ENCODE measurements at regions of chr1 and their contacts with region 1.

Region 1: DNA sequence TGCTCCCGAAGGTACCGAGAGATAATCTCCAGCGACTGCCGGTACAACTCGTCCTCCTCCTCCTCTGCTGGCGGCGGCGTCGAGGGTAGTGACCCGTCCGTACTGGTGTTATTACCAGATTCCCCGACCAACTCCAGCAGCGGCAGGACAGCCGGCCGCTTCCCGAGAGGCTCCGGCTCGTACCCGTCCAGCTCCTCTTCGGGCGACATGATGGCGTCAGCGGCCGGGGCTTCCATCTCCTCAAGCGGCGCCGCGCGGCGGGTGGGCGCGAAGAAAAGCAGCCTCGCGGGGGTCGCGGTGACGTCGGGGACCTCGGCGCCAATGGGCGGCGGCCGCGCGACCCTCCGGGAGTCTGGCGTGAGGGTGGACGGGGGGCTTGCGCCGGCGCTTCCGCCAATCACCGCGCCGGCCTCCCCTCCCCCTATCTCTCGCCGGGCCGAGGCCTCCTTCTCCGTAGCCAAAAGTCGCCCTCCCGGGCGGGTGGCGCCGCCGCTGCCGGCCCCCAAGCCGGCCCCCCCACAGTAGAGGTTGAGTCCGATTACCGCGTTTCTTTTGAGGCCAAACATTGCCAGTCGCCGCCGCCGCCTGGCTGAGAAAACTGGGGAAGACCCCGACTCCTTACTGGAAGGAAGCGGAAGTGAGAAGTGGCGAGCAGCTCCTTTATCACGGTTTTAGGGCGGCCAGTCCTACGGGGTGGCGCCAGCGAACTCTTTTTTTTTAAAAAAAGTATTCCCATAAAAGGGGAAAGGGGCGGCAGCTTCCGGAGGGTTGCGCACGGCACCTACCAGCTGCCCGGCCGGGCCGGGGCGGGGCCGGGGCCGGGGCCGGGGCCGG is at the start of gene MCL1:
- DNase-seq: peak; percentile 94 to 98 (median 97)
- H3K4me3 ChIP-seq: peak within 1 kb of the TSS; percentile 91 to 100 (median 99)
- H3K27ac ChIP-seq: peak within 1 kb of the TSS; percentile 97 to 98
- H3K4me1 ChIP-seq: peaks cover 25 to 34% (median 32%) of the 10 kb centered on the region in 4 experiments
- H3K27me3 ChIP-seq: no peaks in the 10 kb centered on the region

Region 2: GRCh38 chr1:150537732-150538684 is 41.2 kb before region 1 on chr1:
- CTCF ChIA-PET with region 1: no interaction called
- POLR2A ChIA-PET with region 1: no interaction called
- DNase-seq: no peak
- H3K4me3 ChIP-seq: no peak overlapping the region
- H3K27ac ChIP-seq: no peak overlapping the region
- H3K4me1 ChIP-seq: peaks cover 0 to 8% (median 0%) of the 10 kb centered on the region in 4 experiments
- H3K27me3 ChIP-seq: no peaks in the 10 kb centered on the region

Region 3: GRCh38 chr1:150567717-150568593 is 11.2 kb before region 1 on chr1:
- CTCF ChIA-PET with region 1: interaction called, 150 read pairs
- POLR2A ChIA-PET with region 1: interaction called, 77 read pairs
- DNase-seq: peak in 2 of 3 donors; percentile 30 to 56
- H3K4me3 ChIP-seq: peak overlapping the region in 6 of 7 experiments; percentile 45 to 74 (median 60)
- H3K27ac ChIP-seq: peak overlapping the region; percentile 25 to 75
- H3K4me1 ChIP-seq: peaks cover 35 to 69% (median 66%) of the 10 kb centered on the region in 4 experiments
- H3K27me3 ChIP-seq: no peaks in the 10 kb centered on the region

Region 4: DNA sequence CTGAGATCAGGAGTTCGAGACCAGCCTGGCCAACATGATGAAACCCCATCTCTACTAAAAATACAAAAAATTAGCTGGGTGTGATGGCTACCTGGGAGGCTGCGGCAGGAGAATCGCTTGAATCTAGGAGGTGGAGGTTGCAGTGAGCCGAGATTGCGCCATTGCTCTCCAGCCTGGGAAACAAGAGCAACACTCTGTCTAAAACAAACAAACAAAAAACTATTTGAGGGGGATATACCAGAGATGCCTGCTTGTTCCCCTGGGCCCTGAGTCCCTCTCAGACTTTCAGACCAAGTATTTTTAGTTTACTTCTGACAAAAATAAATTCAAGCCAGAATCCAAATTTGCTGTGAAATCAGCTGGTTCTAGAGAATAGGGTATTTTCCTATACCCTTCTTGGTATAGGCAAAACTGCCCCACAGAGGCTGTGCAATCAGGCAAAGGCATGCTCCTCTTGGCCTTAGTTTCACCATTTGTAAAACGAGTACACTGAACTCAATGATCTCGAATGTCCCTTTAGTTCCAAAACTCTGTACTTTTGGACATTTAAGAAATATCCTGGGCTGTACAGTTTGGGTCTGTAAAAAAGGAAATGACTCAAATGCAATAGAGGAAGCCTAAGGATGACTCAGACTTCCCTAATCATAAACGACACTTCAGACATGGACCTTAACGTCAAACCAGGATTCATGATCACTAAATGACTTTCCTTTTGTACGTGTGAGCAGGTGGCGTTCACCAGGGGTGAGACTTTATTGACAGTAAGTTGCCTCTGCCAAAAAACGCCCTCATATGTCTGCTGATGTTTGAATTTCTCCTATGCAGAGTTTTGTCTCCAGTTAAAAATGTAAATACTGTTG is 34.1 kb after region 1 on chr1:
- CTCF ChIA-PET with region 1: interaction called, 35 read pairs
- POLR2A ChIA-PET with region 1: interaction called, 43 read pairs
- DNase-seq: peak; percentile 93 to 98 (median 97)
- H3K4me3 ChIP-seq: peak overlapping the region in 6 of 7 experiments; percentile 22 to 68 (median 44)
- H3K27ac ChIP-seq: peak overlapping the region; percentile 99
- H3K4me1 ChIP-seq: peaks cover 19 to 62% (median 53%) of the 10 kb centered on the region in 4 experiments
- H3K27me3 ChIP-seq: no peaks in the 10 kb centered on the region

Region 5: DNA sequence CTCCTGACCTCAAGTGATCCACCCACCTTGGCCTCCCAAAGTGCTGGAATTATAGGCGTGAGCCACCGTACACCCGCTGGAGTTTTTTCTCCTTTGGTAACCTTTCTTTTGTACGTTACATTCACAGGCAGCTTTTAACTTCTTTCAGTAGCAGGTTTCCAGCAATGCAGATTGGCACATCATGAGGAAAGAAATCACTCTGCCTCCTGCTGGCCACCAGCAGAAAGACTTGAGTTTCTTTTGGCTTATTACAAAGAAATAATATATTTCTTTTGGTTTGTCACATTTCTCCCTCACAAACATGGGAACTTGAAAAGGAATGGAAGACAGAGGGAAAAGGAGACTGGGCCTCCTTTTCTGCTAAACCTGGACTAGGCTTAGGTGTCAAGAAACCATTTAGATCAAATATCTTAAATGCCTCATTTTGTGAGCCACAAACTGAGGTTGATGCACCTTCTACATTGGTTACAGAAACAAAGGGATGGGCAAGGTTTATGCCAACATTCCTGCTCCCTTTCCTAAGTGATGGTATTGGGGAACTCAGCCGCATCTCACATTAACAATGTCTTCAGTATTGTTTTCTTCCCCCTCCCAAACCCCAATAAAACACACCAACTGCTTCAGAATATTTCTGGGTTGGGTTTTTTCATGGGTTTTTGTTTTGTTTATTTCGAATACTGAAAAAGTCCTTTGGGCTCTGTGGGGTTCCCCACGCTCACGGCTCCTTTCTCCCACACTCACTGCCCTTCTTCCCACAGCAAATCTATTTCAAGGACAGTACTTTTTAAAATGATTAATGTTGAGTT is 42.5 kb after region 1 on chr1:
- CTCF ChIA-PET with region 1: interaction called, 37 read pairs
- POLR2A ChIA-PET with region 1: interaction called, 24 read pairs
- DNase-seq: peak; percentile 71 to 84 (median 81)
- H3K4me3 ChIP-seq: peak overlapping the region in 2 of 7 experiments; percentile 30 to 38
- H3K27ac ChIP-seq: peak overlapping the region; percentile 19 to 67
- H3K4me1 ChIP-seq: peaks cover 15 to 41% (median 25%) of the 10 kb centered on the region in 4 experiments
- H3K27me3 ChIP-seq: no peaks in the 10 kb centered on the region

Region 6: GRCh38 chr1:150629115-150629928 is 50.1 kb after region 1 on chr1 and contains the start of gene ENSA:
- CTCF ChIA-PET with region 1: interaction called, 9 read pairs
- POLR2A ChIA-PET with region 1: interaction called, 24 read pairs
- DNase-seq: peak; percentile 100
- H3K4me3 ChIP-seq: peak within 1 kb of the TSS; percentile 61 to 92 (median 82)
- H3K27ac ChIP-seq: peak within 1 kb of the TSS; percentile 97 to 99
- H3K4me1 ChIP-seq: peaks cover 16 to 23% (median 19%) of the 10 kb centered on the region in 4 experiments
- H3K27me3 ChIP-seq: no peaks in the 10 kb centered on the region